Breast epithelium (tissue), 4 donors: ENCODE measurements at regions of chr3 and their contacts with region 1.

Region 1: GRCh38 chr3:5638550-5638949 is 451.0 kb downstream of the EDEM1 start:
- DNase-seq: no peak
- H3K4me3 ChIP-seq: no peak overlapping the region
- H3K27ac ChIP-seq: no peak overlapping the region
- H3K4me1 ChIP-seq: no peaks in the 10 kb centered on the region
- H3K27me3 ChIP-seq: no peaks in the 10 kb centered on the region
- CTCF ChIP-seq: no peak
- POLR2A ChIP-seq: no peak

Region 2: GRCh38 chr3:5616873-5617272 is 21.7 kb before region 1 on chr3:
- intact Hi-C with region 1: no loop called
- DNase-seq: no peak
- H3K4me3 ChIP-seq: no peak overlapping the region
- H3K27ac ChIP-seq: no peak overlapping the region
- H3K4me1 ChIP-seq: no peaks in the 10 kb centered on the region
- H3K27me3 ChIP-seq: no peaks in the 10 kb centered on the region
- CTCF ChIP-seq: no peak
- POLR2A ChIP-seq: no peak

Region 3: DNA sequence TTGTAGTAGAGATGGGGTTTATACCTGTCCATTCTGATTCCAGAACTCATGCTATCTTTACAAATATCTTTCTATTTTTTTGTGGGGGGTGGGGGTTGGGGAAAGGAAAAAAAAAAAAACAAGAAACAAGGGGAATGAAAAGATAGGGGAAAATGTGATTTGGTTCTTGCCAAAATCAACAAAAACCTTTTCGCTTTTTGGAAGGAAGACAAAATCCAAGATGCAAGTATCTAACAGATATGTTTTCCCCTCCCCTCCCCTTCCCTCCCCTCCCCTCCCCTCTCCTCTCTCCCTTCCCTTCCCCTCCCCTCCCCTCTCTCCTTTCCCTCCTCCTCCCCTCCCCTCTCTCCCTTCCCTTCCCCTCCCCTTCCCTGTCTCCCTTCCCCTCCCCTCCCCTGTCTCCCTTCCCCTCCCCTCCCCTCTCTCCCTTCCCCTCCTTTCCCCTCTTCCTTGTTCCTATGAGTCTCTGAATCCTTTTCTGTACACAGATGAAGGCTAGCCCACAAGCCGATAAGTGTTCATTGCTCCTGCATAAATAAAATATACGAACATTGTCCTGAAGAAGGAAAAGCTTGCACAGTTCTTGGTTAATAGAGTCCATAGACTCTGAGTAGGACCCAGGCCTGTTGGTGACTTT is 100.9 kb after region 1 on chr3:
- intact Hi-C with region 1: loop called (anchors 2 kb)
- DNase-seq: no peak
- H3K4me3 ChIP-seq: no peak overlapping the region
- H3K27ac ChIP-seq: no peak overlapping the region
- H3K4me1 ChIP-seq: no peaks in the 10 kb centered on the region
- H3K27me3 ChIP-seq: no peaks in the 10 kb centered on the region
- CTCF ChIP-seq: no peak
- POLR2A ChIP-seq: no peak

Region 4: GRCh38 chr3:6301626-6302025 is 663.1 kb after region 1 on chr3:
- intact Hi-C with region 1: no loop called
- DNase-seq: no peak
- H3K4me3 ChIP-seq: no peak overlapping the region
- H3K27ac ChIP-seq: no peak overlapping the region
- H3K4me1 ChIP-seq: no peaks in the 10 kb centered on the region
- H3K27me3 ChIP-seq: no peaks in the 10 kb centered on the region
- CTCF ChIP-seq: no peak
- POLR2A ChIP-seq: no peak